ENCODE measurements at regions of chr4 and their contacts with region 1.

Region 1: GRCh38 chr4:52721968-52722815 is 29.0 kb downstream of the ERVMER34-1 start:
- DNase-seq: peak; percentile 95
- H3K4me3 ChIP-seq: peak overlapping the region; percentile 90
- H3K27ac ChIP-seq: peak overlapping the region; percentile 96
- H3K4me1 ChIP-seq: peaks cover 20% of the 10 kb centered on the region
- H3K27me3 ChIP-seq: no peaks in the 10 kb centered on the region
- CTCF ChIP-seq: no peak

Region 2: GRCh38 chr4:52576857-52577623 is 145.2 kb before region 1 on chr4:
- intact Hi-C with region 1: no loop called
- DNase-seq: no peak
- H3K4me3 ChIP-seq: no peak overlapping the region
- H3K27ac ChIP-seq: no peak overlapping the region
- H3K4me1 ChIP-seq: peaks cover 21% of the 10 kb centered on the region
- H3K27me3 ChIP-seq: no peaks in the 10 kb centered on the region
- CTCF ChIP-seq: no peak

Region 3: GRCh38 chr4:52861879-52862616 is 139.9 kb after region 1 on chr4 and contains the start of gene RASL11B:
- intact Hi-C with region 1: loop called (anchors 10 kb)
- DNase-seq: peak; percentile 89
- H3K4me3 ChIP-seq: peak within 1 kb of the TSS; percentile 86
- H3K27ac ChIP-seq: peak within 1 kb of the TSS; percentile 84
- H3K4me1 ChIP-seq: peaks cover 56% of the 10 kb centered on the region
- H3K27me3 ChIP-seq: peaks cover 4% of the 10 kb centered on the region
- CTCF ChIP-seq: peak; percentile 67
- total RNA-seq, gene RASL11B: 8.7 TPM